ENCODE measurements at regions of chr1 and their contacts with region 1.

Region 1: DNA sequence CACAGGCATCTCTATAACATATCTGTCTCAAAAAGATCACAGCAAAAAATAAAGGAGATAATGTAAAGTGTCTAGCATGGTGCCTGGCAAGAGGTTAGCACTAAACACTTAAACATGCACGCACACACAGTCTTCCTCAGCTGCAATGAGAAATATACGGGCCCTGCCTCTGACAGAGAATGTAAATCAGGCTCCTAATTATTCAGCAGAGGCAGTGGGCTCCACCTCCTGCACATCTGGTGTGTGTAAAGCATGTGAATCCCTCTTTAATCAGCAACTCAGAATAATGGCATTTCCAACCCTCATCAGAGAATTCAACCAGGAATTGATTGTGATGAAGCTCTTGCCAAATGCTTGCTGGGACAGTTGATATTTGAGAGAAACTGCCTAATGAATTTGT is 85.6 kb upstream of the KCNA3 start:
- DNase-seq: no peak
- ATAC-seq: no peak
- H3K4me3 ChIP-seq: no peak overlapping the region
- H3K27ac ChIP-seq: no peak overlapping the region
- H3K4me1 ChIP-seq: peaks cover 2% of the 10 kb centered on the region; the same call in 1 of the 2 replicates
- H3K27me3 ChIP-seq: no peaks in the 10 kb centered on the region
- CTCF ChIP-seq: no peak
- EP300 ChIP-seq: no peak
- POLR2A ChIP-seq: no peak
- RAD21 ChIP-seq: no peak

Region 2: DNA sequence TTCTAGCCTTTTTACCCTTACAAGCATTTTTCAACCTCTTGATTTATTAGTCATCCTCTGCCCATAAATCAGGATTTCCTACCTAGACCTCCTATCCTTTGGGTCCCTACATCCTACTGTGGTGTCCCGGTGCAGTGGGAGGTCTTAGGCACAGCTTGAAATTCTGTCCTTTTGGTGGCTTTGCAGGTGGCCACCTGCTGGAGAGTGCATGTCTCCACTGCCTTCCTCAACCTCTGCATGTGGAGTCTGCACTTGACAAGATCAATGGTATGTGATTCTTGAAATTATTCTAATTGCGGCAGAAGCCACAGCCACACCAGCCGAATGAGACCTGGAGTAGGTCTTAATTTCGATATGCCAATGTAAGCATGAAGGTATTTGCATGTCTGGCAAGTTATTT is 74.1 kb before region 1 on chr1:
- CTCF ChIA-PET with region 1: interaction called, 19 read pairs
- POLR2A ChIA-PET with region 1: no interaction called
- RAD21 ChIA-PET with region 1: interaction called, 6 read pairs
- SMC1A ChIA-PET with region 1: interaction called, 3 read pairs
- in situ Hi-C with region 1: no loop called
- intact Hi-C with region 1: loop called (anchors 5 kb)
- DNase-seq: no peak
- ATAC-seq: peak; percentile 73
- H3K4me3 ChIP-seq: no peak overlapping the region
- H3K27ac ChIP-seq: no peak overlapping the region
- H3K4me1 ChIP-seq: no peaks in the 10 kb centered on the region
- H3K27me3 ChIP-seq: no peaks in the 10 kb centered on the region
- CTCF ChIP-seq: peak in 2 of 3 experiments; percentile 27 to 33; a peak in 4 of 6 replicates
- EP300 ChIP-seq: no peak
- POLR2A ChIP-seq: no peak
- RAD21 ChIP-seq: peak; percentile 21; the same call in 1 of the 2 replicates